OCI-LY7 (cell line): ENCODE measurements at regions of chr9 and their contacts with region 1.

Region 1: GRCh38 chr9:132381966-132382541 is 24.6 kb downstream of the TTF1 start:
- DNase-seq: peak; percentile 93
- H3K4me3 ChIP-seq: peak overlapping the region; percentile 55
- H3K27ac ChIP-seq: peak overlapping the region; percentile 99
- H3K4me1 ChIP-seq: peaks cover 75% of the 10 kb centered on the region
- CTCF ChIP-seq: no peak

Region 2: GRCh38 chr9:132268725-132269352 is 113.2 kb before region 1 on chr9:
- CTCF ChIA-PET with region 1: no interaction called
- POLR2A ChIA-PET with region 1: interaction called, 4 read pairs
- intact Hi-C with region 1: loop called (anchors 5 kb)
- DNase-seq: peak; percentile 70
- H3K4me3 ChIP-seq: no peak overlapping the region
- H3K27ac ChIP-seq: peak overlapping the region; percentile 21
- H3K4me1 ChIP-seq: no peaks in the 10 kb centered on the region
- CTCF ChIP-seq: peak; percentile 99

Region 3: DNA sequence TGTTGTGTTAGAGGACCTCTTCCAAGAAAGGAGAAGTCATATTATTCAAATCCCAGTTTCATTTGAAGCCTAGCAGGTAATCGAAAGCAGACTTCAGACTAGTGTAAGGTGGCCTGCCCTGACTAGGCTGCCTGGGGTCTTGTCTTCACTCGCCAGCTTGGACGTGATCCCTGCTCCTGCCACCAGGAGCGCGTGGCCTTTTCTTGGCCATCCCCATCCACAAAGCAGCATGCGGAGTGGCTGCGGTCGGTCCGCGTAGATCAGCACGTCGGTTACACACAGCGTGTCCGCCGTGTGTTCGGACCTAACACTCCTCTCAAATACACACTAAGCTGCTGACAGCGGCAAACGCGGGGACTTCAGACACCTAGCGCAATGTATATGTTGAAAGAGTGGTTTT is 65.3 kb after region 1 on chr9:
- CTCF ChIA-PET with region 1: no interaction called
- POLR2A ChIA-PET with region 1: no interaction called
- intact Hi-C with region 1: no loop called
- DNase-seq: no peak
- H3K4me3 ChIP-seq: no peak overlapping the region
- H3K27ac ChIP-seq: no peak overlapping the region
- H3K4me1 ChIP-seq: peaks cover 5% of the 10 kb centered on the region
- CTCF ChIP-seq: no peak